ENCODE measurements at regions of chr19 and their contacts with region 1.

Region 1: DNA sequence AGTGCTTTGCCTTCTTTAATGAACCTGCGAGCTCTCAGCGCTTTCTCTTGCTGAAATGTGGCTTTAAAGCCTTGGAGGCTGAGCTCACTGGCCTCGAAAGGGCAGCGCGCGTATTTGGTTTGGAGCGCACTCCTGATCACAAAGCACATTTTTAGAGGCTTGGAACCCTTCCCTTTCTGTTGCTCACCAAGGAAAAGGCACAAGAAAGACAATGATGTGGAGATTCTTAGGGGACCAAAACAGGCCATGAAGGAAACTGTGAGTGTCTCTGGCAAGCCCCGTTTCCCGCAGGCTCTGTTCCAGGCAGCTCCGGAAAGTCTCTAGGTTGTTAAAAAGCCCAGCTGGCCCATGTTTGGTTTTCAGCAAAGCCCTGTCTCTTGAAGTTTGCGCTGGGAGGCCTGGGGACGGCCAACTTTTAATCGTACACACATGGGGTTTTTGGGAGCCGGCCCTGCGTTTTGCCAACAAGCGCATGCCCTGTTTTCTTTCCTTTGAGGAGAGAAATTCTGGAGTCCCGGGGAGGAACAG is 9.4 kb upstream of the SPC24 start:
- DNase-seq: peak; percentile 52 to 97
- H3K4me3 ChIP-seq: peak overlapping the region in 1 of 2 donors; percentile 52
- H3K27ac ChIP-seq: peak overlapping the region; percentile 94
- H3K4me1 ChIP-seq: peaks cover 30 to 62% of the 10 kb centered on the region in 2 donors
- H3K27me3 ChIP-seq: no peaks in the 10 kb centered on the region
- CTCF ChIP-seq: peak in 1 of 3 experiments; percentile 16

Region 2: GRCh38 chr19:11064831-11065303 is 100.1 kb before region 1 on chr19:
- intact Hi-C with region 1: no loop called
- DNase-seq: no peak
- H3K4me3 ChIP-seq: no peak overlapping the region
- H3K27ac ChIP-seq: no peak overlapping the region
- H3K4me1 ChIP-seq: no peaks in the 10 kb centered on the region
- H3K27me3 ChIP-seq: no peaks in the 10 kb centered on the region
- CTCF ChIP-seq: no peak

Region 3: GRCh38 chr19:11197264-11198174 is 32.6 kb after region 1 on chr19 and contains the start of gene KANK2:
- intact Hi-C with region 1: loop called (anchors 2 kb)
- DNase-seq: peak; percentile 39 to 88
- H3K4me3 ChIP-seq: peak within 1 kb of the TSS; percentile 67
- H3K27ac ChIP-seq: peak within 1 kb of the TSS; percentile 83 to 89
- H3K4me1 ChIP-seq: peaks cover 22 to 33% of the 10 kb centered on the region in 2 donors
- H3K27me3 ChIP-seq: no peaks in the 10 kb centered on the region
- CTCF ChIP-seq: no peak
- total RNA-seq, gene KANK2: 572 TPM

Region 4: GRCh38 chr19:11558881-11559828 is 394.2 kb after region 1 on chr19 and contains the start of gene ELOF1:
- intact Hi-C with region 1: no loop called
- DNase-seq: peak; percentile 93 to 98
- H3K4me3 ChIP-seq: peak within 1 kb of the TSS; percentile 56 to 76
- H3K27ac ChIP-seq: peak within 1 kb of the TSS; percentile 62 to 64
- H3K4me1 ChIP-seq: peaks cover 7 to 25% of the 10 kb centered on the region in 2 donors
- H3K27me3 ChIP-seq: no peaks in the 10 kb centered on the region
- CTCF ChIP-seq: peak in 2 of 3 experiments; percentile 10 to 24
- total RNA-seq, gene ELOF1: 28.9 TPM

Measured in ascending aorta (tissue), 2 donors.